Breast epithelium (tissue), 4 donors: ENCODE measurements at regions of chr13 and their contacts with region 1.

Region 1: GRCh38 chr13:50081679-50082425 is 66.6 kb downstream of the KCNRG start:
- DNase-seq: peak; percentile 98
- H3K4me3 ChIP-seq: peak overlapping the region; percentile 58 to 84 (median 78)
- H3K27ac ChIP-seq: peak overlapping the region; percentile 85
- H3K4me1 ChIP-seq: peaks cover 0 to 7% of the 10 kb centered on the region in 2 donors
- H3K27me3 ChIP-seq: peaks cover 0 to 8% of the 10 kb centered on the region in 2 donors
- CTCF ChIP-seq: no peak
- POLR2A ChIP-seq: no peak

Region 2: DNA sequence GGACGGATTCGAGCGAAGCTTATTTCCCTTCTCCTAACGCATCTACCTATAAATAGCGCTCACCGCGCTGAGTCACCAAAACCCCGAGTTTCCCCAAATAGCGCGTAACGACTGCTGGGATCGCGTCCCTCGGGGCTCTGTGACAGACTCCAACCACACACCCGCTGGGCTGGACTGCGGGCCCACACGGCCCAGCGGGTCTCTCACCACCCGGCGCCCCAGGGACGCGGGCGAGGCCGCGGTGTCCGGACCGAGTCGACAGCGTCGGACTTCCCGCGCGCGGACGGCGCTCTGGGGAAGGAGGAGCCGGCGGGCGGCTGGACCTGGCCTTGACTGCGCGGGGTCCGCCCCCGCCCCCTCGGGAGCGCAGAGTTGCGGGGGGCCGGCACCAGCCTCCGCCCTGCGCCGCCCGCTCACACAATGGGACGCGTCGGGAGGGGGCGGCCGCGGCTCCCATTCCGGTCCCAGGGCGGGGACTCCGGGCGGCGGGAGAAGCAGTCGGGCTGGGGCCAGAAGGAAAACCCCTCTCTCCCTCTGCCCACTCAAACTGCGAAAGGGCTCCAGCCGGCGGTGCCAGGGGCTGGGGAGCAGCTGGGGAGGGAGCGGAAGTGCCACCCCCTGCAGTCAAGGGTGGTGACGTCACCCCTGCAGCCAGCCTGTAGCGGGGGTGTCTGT is 42.1 kb after region 1 on chr13:
- intact Hi-C with region 1: loop called (anchors 5 kb)
- DNase-seq: peak; percentile 67 to 96
- H3K4me3 ChIP-seq: peak overlapping the region; percentile 90 to 99 (median 97)
- H3K27ac ChIP-seq: peak overlapping the region; percentile 98 to 99
- H3K4me1 ChIP-seq: no peaks in the 10 kb centered on the region
- H3K27me3 ChIP-seq: peaks cover 0 to 26% of the 10 kb centered on the region in 2 donors
- CTCF ChIP-seq: no peak
- POLR2A ChIP-seq: peak; percentile 60

Region 3: GRCh38 chr13:50208826-50209335 is 127.0 kb after region 1 on chr13:
- intact Hi-C with region 1: no loop called
- DNase-seq: peak in 1 of 2 donors; percentile 53
- H3K4me3 ChIP-seq: peak overlapping the region; percentile 17 to 50 (median 17)
- H3K27ac ChIP-seq: peak overlapping the region in 1 of 2 donors; percentile 46
- H3K4me1 ChIP-seq: no peaks in the 10 kb centered on the region
- H3K27me3 ChIP-seq: no peaks in the 10 kb centered on the region
- CTCF ChIP-seq: no peak
- POLR2A ChIP-seq: no peak